ENCODE measurements at regions of chr15 and their contacts with region 1.

Region 1: GRCh38 chr15:23642413-23643044 is 5.1 kb downstream of the MAGEL2 start:
- DNase-seq: no peak
- H3K4me3 ChIP-seq: no peak overlapping the region
- H3K27ac ChIP-seq: no peak overlapping the region
- H3K4me1 ChIP-seq: no peaks in the 10 kb centered on the region
- H3K27me3 ChIP-seq: peaks cover 0 to 31% (median 4%) of the 10 kb centered on the region in 7 donors
- CTCF ChIP-seq: peak; percentile 37 to 84 (median 79)
- POLR2A ChIP-seq: no peak

Region 2: GRCh38 chr15:23467110-23467600 is 175.4 kb before region 1 on chr15:
- intact Hi-C with region 1: no loop called
- DNase-seq: no peak
- H3K4me3 ChIP-seq: no peak overlapping the region
- H3K27ac ChIP-seq: no peak overlapping the region
- H3K4me1 ChIP-seq: no peaks in the 10 kb centered on the region
- H3K27me3 ChIP-seq: no peaks in the 10 kb centered on the region
- CTCF ChIP-seq: peak in 3 of 11 experiments; percentile 12 to 34 (median 12)
- POLR2A ChIP-seq: no peak

Region 3: DNA sequence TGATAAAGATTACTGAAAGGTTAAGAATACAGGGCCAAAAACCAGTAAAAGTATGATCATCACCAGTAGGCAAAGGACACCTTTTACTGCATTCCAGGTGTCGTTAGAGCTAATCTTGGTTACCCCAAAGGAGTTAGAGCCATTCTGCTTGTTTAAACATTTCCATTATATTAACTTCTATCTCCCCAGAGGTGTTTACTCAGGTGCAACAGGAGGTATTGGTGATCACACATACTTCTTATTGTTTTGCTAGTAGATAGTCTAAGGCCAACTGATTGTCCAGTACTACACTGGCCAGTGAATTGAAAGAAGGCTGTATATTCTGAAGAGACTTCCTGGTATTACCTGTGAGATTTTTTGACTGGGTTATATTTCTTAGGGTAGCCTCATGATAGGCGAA is 54.3 kb before region 1 on chr15:
- intact Hi-C with region 1: no loop called
- DNase-seq: no peak
- H3K4me3 ChIP-seq: no peak overlapping the region
- H3K27ac ChIP-seq: no peak overlapping the region
- H3K4me1 ChIP-seq: no peaks in the 10 kb centered on the region
- H3K27me3 ChIP-seq: no peaks in the 10 kb centered on the region
- CTCF ChIP-seq: no peak
- POLR2A ChIP-seq: no peak

Region 4: GRCh38 chr15:23877502-23878412 is 235.2 kb after region 1 on chr15:
- intact Hi-C with region 1: loop called (anchors 5 kb)
- DNase-seq: no peak
- H3K4me3 ChIP-seq: no peak overlapping the region
- H3K27ac ChIP-seq: no peak overlapping the region
- H3K4me1 ChIP-seq: no peaks in the 10 kb centered on the region
- H3K27me3 ChIP-seq: no peaks in the 10 kb centered on the region
- CTCF ChIP-seq: peak in 10 of 11 experiments; percentile 15 to 63 (median 50)
- POLR2A ChIP-seq: no peak

Measured in spleen (tissue), 13 donors.